Heart left ventricle (tissue), 16 donors: ENCODE measurements at regions of chr2 and their contacts with region 1.

Region 1: DNA sequence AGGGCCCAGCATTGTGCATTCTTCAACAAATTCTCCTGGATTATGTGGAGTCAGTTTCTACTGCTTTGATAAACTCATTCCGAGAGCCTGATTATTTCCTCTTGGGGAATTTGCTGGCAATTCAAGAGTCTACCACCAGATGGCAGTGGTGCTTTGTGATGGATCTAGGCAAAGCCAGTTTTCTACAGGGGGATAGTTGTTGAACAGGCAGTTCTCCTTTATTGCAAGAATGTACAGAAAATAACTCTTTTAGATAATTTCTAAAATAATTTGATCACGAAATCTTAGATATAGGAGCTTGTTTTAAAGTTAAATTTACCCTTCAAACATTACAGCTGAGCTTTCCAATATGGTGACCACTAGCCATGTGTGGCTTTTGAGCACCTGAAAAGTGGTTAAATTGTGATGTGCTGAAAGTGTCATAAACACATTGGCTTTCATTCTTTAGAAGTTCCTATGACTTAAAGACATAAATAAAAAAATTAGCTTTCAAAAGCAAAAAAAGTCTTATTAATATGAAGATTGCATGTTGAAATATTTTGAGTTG is 66.7 kb upstream of the HAAO start:
- DNase-seq: peak in 2 of 5 donors; percentile 57 to 58
- ATAC-seq: peak in 1 of 4 donors; percentile 20
- H3K4me3 ChIP-seq: no peak overlapping the region
- H3K27ac ChIP-seq: peak overlapping the region in 4 of 12 donors; percentile 7 to 52 (median 31)
- H3K4me1 ChIP-seq: peaks cover 0 to 14% (median 7%) of the 10 kb centered on the region in 12 donors
- H3K27me3 ChIP-seq: no peaks in the 10 kb centered on the region
- CTCF ChIP-seq: peak; percentile 75 to 93 (median 87)
- POLR2A ChIP-seq: no peak

Region 2: GRCh38 chr2:42922790-42923579 is 63.9 kb after region 1 on chr2:
- intact Hi-C with region 1: loop called in 2 of 10 experiments (anchors 5 to 10 kb)
- DNase-seq: peak in 1 of 5 donors; percentile 20
- ATAC-seq: peak in 2 of 4 donors; percentile 17 to 36
- H3K4me3 ChIP-seq: no peak overlapping the region
- H3K27ac ChIP-seq: peak overlapping the region; percentile 85 to 98 (median 91)
- H3K4me1 ChIP-seq: peaks cover 28 to 70% (median 58%) of the 10 kb centered on the region in 12 donors
- H3K27me3 ChIP-seq: no peaks in the 10 kb centered on the region
- CTCF ChIP-seq: no peak
- POLR2A ChIP-seq: no peak

Region 3: DNA sequence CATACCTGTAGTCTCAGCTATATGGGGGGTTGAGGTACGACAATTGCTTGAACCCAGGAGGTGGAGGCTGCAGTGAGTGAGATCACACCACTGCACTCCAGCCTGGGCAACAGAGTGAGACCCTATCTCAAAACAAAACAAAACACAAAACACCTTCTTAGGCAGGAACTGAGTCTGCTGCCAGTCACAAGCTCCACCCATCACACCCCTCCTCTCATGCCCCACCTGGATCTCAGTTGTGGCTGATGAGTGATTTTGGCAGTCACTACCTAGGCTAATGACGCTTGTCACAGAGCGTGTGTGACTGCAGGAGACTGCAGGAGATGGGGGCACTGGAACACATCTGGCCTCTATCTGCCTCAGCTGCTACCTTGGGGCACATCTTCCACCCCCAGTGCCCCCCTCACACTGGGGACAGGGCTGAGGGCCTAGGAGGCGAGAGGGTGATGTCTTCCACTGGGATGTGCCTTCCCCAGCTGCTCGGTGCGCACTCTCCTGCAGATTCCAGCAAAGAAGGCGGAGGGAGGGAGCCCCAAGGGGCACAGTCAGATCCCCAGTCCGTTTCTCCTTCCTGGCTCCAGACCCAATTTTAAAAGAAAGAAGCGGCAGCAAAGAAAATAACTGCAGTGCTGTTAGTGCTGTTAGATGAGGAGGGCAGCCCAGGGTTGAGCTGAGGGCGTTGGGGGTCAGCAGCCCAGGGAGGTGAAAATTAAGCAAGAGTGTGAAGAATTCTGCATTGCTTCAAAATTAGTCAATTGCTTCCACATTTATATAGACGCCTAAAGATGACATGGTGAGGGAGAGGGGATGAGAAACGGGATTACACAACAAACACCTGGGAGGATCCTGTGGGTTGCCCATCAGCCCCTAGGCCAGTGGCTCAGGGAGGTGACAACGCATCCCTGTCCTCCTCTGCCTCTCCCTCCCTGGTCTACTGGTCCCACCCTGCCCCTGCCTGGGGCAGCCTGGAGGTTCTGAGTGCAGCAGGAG is 76.9 kb after region 1 on chr2:
- intact Hi-C with region 1: loop called in 5 of 10 experiments (anchors 5 kb)
- DNase-seq: peak in 2 of 5 donors; percentile 59 to 63
- ATAC-seq: no peak
- H3K4me3 ChIP-seq: no peak overlapping the region
- H3K27ac ChIP-seq: peak overlapping the region in 7 of 12 donors; percentile 16 to 57 (median 33)
- H3K4me1 ChIP-seq: peaks cover 3 to 77% (median 48%) of the 10 kb centered on the region in 12 donors
- H3K27me3 ChIP-seq: no peaks in the 10 kb centered on the region
- CTCF ChIP-seq: no peak
- POLR2A ChIP-seq: no peak

Region 4: DNA sequence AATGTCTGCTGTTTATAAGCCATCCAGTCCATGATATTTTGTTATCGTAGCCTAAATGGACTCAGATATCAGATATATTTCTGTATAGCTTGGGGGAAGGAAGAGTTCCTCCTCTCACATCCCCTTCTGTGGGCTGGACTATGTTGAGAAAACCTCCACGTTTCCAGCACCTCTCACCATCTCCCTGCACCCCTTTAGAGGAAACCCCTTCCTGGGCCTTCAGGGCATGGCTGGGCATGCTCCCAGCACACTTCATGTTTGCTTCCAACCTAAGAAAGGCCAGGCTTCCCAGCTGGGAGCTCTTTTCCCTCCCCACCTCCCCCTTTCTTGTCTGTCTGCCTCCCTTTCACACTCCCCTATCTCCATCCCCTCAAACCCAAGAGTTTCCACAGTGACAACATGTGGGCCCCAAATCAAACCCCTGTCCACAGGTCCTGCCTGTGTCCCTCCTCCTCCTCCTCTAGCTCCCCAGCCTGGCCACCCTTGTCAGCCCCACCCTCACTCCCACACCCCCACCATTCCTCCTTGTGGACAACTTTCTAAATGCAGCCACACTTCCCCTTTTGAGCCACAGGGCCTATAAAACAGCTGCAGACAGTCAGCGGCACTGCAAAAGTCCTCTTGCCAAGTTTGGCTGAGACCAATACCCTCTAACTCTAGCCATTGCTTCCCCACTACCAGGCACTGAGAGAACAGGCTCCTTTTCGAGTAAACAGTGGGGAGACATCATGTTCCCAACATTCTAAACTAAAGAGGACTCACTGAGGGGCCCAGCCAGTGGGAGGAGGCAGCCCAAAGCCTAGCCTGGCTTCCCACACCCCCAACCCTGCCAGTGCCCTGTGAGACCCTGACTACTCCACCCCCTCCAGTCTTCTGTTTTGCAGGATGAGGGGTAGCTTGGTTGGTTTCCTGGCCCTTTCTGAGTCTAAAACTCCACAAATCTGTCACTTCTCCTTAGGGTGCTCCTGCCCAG is 246.8 kb after region 1 on chr2:
- intact Hi-C with region 1: loop called in 2 of 10 experiments (anchors 10 kb)
- DNase-seq: peak; percentile 65 to 83 (median 69)
- ATAC-seq: peak; percentile 33 to 64 (median 56)
- H3K4me3 ChIP-seq: no peak overlapping the region
- H3K27ac ChIP-seq: peak overlapping the region; percentile 38 to 90 (median 72)
- H3K4me1 ChIP-seq: peaks cover 0 to 91% (median 41%) of the 10 kb centered on the region in 12 donors
- H3K27me3 ChIP-seq: no peaks in the 10 kb centered on the region
- CTCF ChIP-seq: peak in 8 of 12 donors; percentile 8 to 44 (median 29)
- POLR2A ChIP-seq: no peak